MCF 10A (cell line): ENCODE measurements at regions of chr1 and their contacts with region 1.

Region 1: DNA sequence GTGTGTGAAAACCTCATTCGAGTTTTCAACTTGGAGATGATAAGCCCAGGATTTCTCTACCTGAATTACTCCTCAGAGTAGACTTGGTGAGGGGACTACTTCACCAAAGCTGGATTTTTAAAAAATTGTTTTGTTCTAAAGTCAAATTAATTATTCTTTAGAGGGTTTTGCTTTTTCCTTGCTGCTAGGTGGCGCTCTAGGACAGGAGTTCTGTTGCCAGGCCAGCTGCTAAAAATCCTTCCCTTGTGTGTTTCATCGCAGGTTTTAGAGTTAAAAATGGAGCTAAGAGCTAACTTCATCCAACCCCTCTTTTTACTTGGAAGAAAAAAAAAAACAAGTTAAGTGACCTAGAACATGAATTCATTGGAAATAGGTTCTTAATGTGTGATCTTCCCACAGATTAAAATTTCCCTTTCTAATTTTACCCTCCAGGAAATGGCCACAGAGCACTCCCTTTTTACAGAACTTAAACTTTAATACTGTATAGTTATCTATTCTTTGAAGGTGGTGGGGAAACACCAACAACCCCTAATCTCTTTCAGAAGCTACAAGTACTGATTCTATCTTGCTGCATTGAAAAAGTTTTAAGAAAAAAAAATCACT is 36.7 kb upstream of the FAM163A start:
- DNase-seq: peak; percentile 78
- H3K4me3 Mint-ChIP-seq: no peak overlapping the region
- H3K27ac Mint-ChIP-seq: no peak overlapping the region
- H3K4me1 Mint-ChIP-seq: no peaks in the 10 kb centered on the region
- H3K27me3 Mint-ChIP-seq: peaks cover 18% of the 10 kb centered on the region
- CTCF ChIP-seq: peak; percentile 92

Region 2: GRCh38 chr1:179251675-179252074 is 454.8 kb before region 1 on chr1:
- CTCF ChIA-PET with region 1: interaction called, 8 read pairs
- POLR2A ChIA-PET with region 1: no interaction called
- intact Hi-C with region 1: loop called (anchors 1 kb)
- DNase-seq: peak; percentile 56
- H3K4me3 Mint-ChIP-seq: no peak overlapping the region
- H3K27ac Mint-ChIP-seq: no peak overlapping the region
- H3K4me1 Mint-ChIP-seq: no peaks in the 10 kb centered on the region
- H3K27me3 Mint-ChIP-seq: no peaks in the 10 kb centered on the region
- CTCF ChIP-seq: peak; percentile 73

Region 3: DNA sequence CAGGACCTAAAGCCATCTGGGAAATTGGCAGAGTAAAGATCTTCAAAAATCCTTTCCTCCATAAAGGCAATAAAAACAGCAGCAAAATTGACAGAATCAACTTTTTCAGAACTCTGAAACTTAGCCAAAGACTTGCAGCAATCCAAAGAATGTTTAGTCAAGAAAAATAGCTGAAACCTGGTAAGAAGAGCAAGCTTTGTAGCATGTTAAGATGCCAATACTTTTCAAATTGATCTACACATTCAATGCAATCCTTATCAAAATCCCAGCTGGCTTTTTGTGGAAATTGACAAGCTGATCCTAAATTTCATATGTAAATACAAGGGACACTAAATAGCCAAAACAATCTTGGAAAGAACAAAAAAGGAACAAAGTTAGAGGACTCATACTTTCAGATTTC is 12.8 kb after region 1 on chr1:
- CTCF ChIA-PET with region 1: interaction called, 40 read pairs
- POLR2A ChIA-PET with region 1: no interaction called
- intact Hi-C with region 1: no loop called
- DNase-seq: no peak
- H3K4me3 Mint-ChIP-seq: no peak overlapping the region
- H3K27ac Mint-ChIP-seq: no peak overlapping the region
- H3K4me1 Mint-ChIP-seq: no peaks in the 10 kb centered on the region
- H3K27me3 Mint-ChIP-seq: no peaks in the 10 kb centered on the region
- CTCF ChIP-seq: no peak

Region 4: GRCh38 chr1:179742717-179743678 is 36.6 kb after region 1 on chr1 and contains the start of gene FAM163A:
- CTCF ChIA-PET with region 1: interaction called, 36 read pairs
- POLR2A ChIA-PET with region 1: no interaction called
- intact Hi-C with region 1: no loop called
- DNase-seq: no peak
- H3K4me3 Mint-ChIP-seq: no peak within 1 kb of the TSS
- H3K27ac Mint-ChIP-seq: no peak within 1 kb of the TSS
- H3K4me1 Mint-ChIP-seq: no peaks in the 10 kb centered on the region
- H3K27me3 Mint-ChIP-seq: peaks cover 75% of the 10 kb centered on the region
- CTCF ChIP-seq: no peak
- total RNA-seq, gene FAM163A: not detected in 2 replicates

Region 5: GRCh38 chr1:179786815-179787685 is 80.6 kb after region 1 on chr1:
- CTCF ChIA-PET with region 1: interaction called, 13 read pairs
- POLR2A ChIA-PET with region 1: no interaction called
- intact Hi-C with region 1: no loop called
- DNase-seq: no peak
- H3K4me3 Mint-ChIP-seq: no peak overlapping the region
- H3K27ac Mint-ChIP-seq: no peak overlapping the region
- H3K4me1 Mint-ChIP-seq: no peaks in the 10 kb centered on the region
- H3K27me3 Mint-ChIP-seq: no peaks in the 10 kb centered on the region
- CTCF ChIP-seq: no peak

Region 6: GRCh38 chr1:179803104-179803503 is 96.7 kb after region 1 on chr1:
- CTCF ChIA-PET with region 1: interaction called, 2,115 read pairs
- POLR2A ChIA-PET with region 1: interaction called, 3 read pairs
- intact Hi-C with region 1: no loop called
- DNase-seq: no peak
- H3K4me3 Mint-ChIP-seq: no peak overlapping the region
- H3K27ac Mint-ChIP-seq: no peak overlapping the region
- H3K4me1 Mint-ChIP-seq: no peaks in the 10 kb centered on the region
- H3K27me3 Mint-ChIP-seq: peaks cover 24% of the 10 kb centered on the region
- CTCF ChIP-seq: no peak